Esophagus squamous epithelium (tissue), 5 donors: ENCODE measurements at regions of chrX and their contacts with region 1.

Region 1: DNA sequence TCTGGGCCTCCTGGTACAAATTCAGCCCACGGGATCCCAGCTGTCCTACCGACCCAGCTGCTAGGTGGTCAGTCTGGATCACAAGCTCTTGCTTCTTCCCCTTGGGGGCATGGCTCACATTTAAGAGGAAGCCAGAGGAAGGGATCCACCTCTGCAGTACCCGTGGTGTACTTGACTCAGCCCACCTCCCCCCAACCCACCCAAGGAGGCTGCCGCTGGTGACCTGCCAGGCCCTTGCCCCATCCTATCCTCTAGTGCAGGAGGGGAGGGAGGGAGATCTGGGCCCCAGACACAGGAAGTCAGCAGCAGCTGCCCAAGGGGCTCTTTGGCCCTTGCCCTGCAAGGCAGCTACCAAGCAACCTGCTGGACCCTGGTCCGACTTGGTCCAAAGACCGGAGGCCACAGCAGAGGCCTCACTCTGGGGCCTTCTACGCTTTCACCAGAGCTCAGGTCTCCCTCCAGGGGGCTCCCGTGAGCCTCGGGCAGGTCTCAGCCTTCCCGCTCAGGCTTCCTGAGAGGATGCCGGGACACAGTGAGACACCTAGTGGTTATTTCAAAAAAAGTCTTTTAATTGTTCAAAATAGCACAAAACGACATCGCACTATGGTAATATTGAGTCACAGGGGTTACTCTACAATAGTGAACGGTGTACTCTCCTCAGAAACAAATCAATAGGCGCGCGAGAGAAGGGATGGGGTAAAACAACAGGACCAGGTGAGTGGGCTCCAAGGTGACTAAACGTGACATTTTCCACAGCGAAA is 2.7 kb upstream of the RENBP start:
- DNase-seq: no peak
- H3K4me3 ChIP-seq: no peak overlapping the region
- H3K27ac ChIP-seq: peak overlapping the region in 3 of 4 donors; percentile 59 to 77 (median 77)
- H3K4me1 ChIP-seq: peaks cover 0 to 25% (median 0%) of the 10 kb centered on the region in 3 donors
- H3K27me3 ChIP-seq: no peaks in the 10 kb centered on the region
- CTCF ChIP-seq: peak; percentile 61 to 82 (median 78)
- POLR2A ChIP-seq: no peak

Region 2: GRCh38 chrX:153766098-153766817 is 180.9 kb before region 1 on chrX:
- intact Hi-C with region 1: loop called (anchors 5 kb)
- DNase-seq: no peak
- H3K4me3 ChIP-seq: peak overlapping the region in 3 of 4 donors; percentile 5 to 60 (median 9)
- H3K27ac ChIP-seq: peak overlapping the region; percentile 30 to 60 (median 47)
- H3K4me1 ChIP-seq: peaks cover 0 to 34% (median 20%) of the 10 kb centered on the region in 3 donors
- H3K27me3 ChIP-seq: no peaks in the 10 kb centered on the region
- CTCF ChIP-seq: no peak
- POLR2A ChIP-seq: no peak

Region 3: DNA sequence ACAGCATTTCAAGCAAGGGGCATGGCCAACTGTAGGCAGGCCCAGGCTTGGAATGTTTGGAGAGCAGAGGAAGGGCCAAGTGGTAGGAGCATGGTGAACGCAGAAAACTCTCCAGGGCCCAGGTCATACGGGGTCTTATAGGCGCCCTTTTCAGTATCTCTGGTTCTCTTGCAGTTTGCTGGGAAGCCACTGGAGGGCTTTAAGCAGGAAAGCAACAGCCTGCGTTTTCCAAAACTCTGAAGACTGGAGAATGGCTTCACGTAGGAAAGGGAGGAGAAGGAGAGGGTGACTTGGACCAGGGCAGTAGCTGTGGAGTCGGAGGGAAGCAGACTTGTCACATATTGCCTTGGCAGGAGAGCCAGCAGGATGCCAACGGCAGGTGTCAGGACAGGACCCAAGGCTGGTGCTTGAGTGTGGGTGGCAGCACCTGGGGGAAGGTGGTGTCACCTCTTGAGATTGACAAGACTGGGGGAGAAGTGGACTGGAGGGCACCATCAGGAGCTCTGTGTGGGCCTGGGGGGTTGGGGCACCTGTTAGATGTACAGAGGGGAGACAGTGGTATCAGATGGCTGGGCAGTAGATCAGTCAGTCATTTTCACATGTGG is 370.3 kb after region 1 on chrX:
- intact Hi-C with region 1: no loop called
- DNase-seq: no peak
- H3K4me3 ChIP-seq: no peak overlapping the region
- H3K27ac ChIP-seq: no peak overlapping the region
- H3K4me1 ChIP-seq: no peaks in the 10 kb centered on the region
- H3K27me3 ChIP-seq: no peaks in the 10 kb centered on the region
- CTCF ChIP-seq: peak in 4 of 6 experiments; percentile 30 to 43 (median 42)
- POLR2A ChIP-seq: no peak